ENCODE measurements at regions of chr2 and their contacts with region 1.

Region 1: GRCh38 chr2:70789304-70790135 is 923 bp downstream of the FIGLA start:
- DNase-seq: peak; percentile 78
- H3K4me3 Mint-ChIP-seq: peak overlapping the region; percentile 56
- H3K27ac Mint-ChIP-seq: no peak overlapping the region
- H3K4me1 Mint-ChIP-seq: peaks cover 10% of the 10 kb centered on the region
- H3K27me3 Mint-ChIP-seq: peaks cover 69% of the 10 kb centered on the region

Region 2: GRCh38 chr2:70656421-70657010 is 133.0 kb before region 1 on chr2:
- CTCF ChIA-PET with region 1: interaction called, 29 read pairs
- DNase-seq: peak; percentile 48
- H3K4me3 Mint-ChIP-seq: no peak overlapping the region
- H3K27ac Mint-ChIP-seq: no peak overlapping the region
- H3K4me1 Mint-ChIP-seq: peaks cover 31% of the 10 kb centered on the region
- H3K27me3 Mint-ChIP-seq: peaks cover 23% of the 10 kb centered on the region

Region 3: GRCh38 chr2:70671092-70671675 is 118.3 kb before region 1 on chr2:
- CTCF ChIA-PET with region 1: no interaction called
- DNase-seq: no peak
- H3K4me3 Mint-ChIP-seq: no peak overlapping the region
- H3K27ac Mint-ChIP-seq: no peak overlapping the region
- H3K4me1 Mint-ChIP-seq: peaks cover 10% of the 10 kb centered on the region
- H3K27me3 Mint-ChIP-seq: no peaks in the 10 kb centered on the region

Region 4: GRCh38 chr2:70759446-70759845 is 30.1 kb before region 1 on chr2:
- CTCF ChIA-PET with region 1: no interaction called
- DNase-seq: no peak
- H3K4me3 Mint-ChIP-seq: no peak overlapping the region
- H3K27ac Mint-ChIP-seq: no peak overlapping the region
- H3K4me1 Mint-ChIP-seq: no peaks in the 10 kb centered on the region
- H3K27me3 Mint-ChIP-seq: peaks cover 7% of the 10 kb centered on the region

Region 5: GRCh38 chr2:70861777-70862625 is 72.5 kb after region 1 on chr2:
- CTCF ChIA-PET with region 1: interaction called, 61 read pairs
- DNase-seq: peak; percentile 79
- H3K4me3 Mint-ChIP-seq: no peak overlapping the region
- H3K27ac Mint-ChIP-seq: no peak overlapping the region
- H3K4me1 Mint-ChIP-seq: no peaks in the 10 kb centered on the region
- H3K27me3 Mint-ChIP-seq: peaks cover 55% of the 10 kb centered on the region

Region 6: GRCh38 chr2:70919672-70920366 is 130.3 kb after region 1 on chr2:
- CTCF ChIA-PET with region 1: interaction called, 32 read pairs
- DNase-seq: peak; percentile 80
- H3K4me3 Mint-ChIP-seq: no peak overlapping the region
- H3K27ac Mint-ChIP-seq: no peak overlapping the region
- H3K4me1 Mint-ChIP-seq: no peaks in the 10 kb centered on the region
- H3K27me3 Mint-ChIP-seq: peaks cover 30% of the 10 kb centered on the region

Region 7: DNA sequence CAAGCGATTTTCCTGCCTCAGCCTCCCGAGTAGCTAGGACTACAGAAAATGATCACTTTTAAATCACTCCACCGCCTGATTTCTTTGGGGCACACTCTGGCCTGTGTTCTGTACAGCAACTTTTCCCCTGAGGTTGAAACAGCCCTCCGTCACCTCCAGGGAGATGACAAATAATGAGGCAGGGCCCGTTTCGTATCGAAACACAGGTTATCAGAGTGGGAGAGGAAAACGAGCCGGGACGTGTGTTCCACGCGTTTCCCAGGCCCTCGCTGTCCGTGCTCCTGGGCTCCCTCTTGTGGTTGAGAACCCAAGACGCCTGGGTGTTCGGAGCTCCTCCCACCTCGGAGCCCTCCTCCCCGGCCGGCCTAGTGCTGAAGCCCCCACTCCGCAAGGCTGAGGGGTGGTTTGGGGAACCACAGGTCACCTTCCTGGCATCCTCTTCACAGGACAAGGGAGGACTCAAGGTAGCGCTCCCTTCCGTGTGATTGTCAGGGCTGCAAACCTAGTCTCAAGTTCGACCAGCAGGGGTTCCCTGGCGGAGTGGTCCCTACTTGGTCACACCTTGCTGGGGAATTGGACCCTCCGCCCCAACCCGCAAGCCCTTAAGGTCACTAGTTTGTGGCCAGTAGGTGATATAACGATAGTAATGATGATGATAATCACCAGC is 158.9 kb after region 1 on chr2:
- CTCF ChIA-PET with region 1: interaction called, 52 read pairs
- DNase-seq: peak; percentile 83
- H3K4me3 Mint-ChIP-seq: peak overlapping the region; percentile 39
- H3K27ac Mint-ChIP-seq: no peak overlapping the region
- H3K4me1 Mint-ChIP-seq: peaks cover 12% of the 10 kb centered on the region
- H3K27me3 Mint-ChIP-seq: peaks cover 53% of the 10 kb centered on the region

Region 8: DNA sequence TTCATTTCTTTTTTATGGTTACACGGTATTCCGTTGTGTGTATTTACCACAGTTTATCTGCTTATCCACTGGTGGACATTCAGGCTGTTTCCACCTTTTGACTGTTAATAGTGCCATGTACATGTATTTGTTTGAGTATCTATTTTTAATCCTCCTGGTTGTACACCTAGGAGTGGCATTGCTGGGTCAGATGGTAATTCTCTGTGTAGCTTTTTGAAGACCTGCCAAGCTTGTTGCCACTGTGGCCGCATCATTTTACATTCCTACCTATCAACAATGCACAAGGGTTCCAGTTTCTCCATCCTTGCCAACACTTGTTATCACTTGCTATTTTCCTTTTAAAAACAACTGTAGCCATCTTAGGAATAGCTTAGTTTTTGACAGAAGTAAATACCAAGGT is 354.3 kb after region 1 on chr2:
- CTCF ChIA-PET with region 1: no interaction called
- DNase-seq: no peak
- H3K4me3 Mint-ChIP-seq: no peak overlapping the region
- H3K27ac Mint-ChIP-seq: no peak overlapping the region
- H3K4me1 Mint-ChIP-seq: no peaks in the 10 kb centered on the region
- H3K27me3 Mint-ChIP-seq: no peaks in the 10 kb centered on the region

Region 9: DNA sequence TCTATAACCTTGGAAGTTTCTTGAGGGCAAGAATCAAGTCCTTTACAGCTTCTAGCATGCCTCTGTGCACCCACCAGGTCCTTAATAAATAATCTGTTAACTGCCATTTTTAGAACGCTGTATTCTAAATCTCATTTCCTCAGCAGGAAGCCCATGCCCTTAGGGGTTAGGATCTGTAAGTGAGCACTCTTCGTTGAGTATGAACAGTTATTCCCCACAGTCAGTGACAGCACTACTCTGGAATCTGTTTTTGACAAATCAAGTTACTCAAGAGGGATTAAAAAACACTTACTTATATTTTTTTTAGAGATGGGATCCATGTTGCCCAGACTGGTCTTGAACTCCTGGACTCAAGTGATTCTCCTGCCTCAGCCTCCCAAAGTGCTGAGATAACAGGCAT is 422.8 kb after region 1 on chr2:
- CTCF ChIA-PET with region 1: no interaction called
- DNase-seq: no peak
- H3K4me3 Mint-ChIP-seq: no peak overlapping the region
- H3K27ac Mint-ChIP-seq: no peak overlapping the region
- H3K4me1 Mint-ChIP-seq: no peaks in the 10 kb centered on the region
- H3K27me3 Mint-ChIP-seq: no peaks in the 10 kb centered on the region

Measured in activated naive CD4-positive, alpha-beta T cell treated with anti-CD3 and anti-CD28 coated beads, Interleukin-2, amount 10 ng/mL, durations not matched to agents 7 days and 5 days (primary cell).